Activated T-helper 1 cell treated with anti-CD3 and anti-CD28 coated beads, Interleukin-12 subunit alpha, Interleukin-12 subunit beta, Interleukin-2, Interleukin-4 antibody, amounts not matched to agents 30 ng/mL and 10 ng/mL and 1 ng/mL, durations not matched to agents 14 hours and 24 hours and 36 hours (primary cell): ENCODE measurements at regions of chr3 and their contacts with region 1.

Region 1: DNA sequence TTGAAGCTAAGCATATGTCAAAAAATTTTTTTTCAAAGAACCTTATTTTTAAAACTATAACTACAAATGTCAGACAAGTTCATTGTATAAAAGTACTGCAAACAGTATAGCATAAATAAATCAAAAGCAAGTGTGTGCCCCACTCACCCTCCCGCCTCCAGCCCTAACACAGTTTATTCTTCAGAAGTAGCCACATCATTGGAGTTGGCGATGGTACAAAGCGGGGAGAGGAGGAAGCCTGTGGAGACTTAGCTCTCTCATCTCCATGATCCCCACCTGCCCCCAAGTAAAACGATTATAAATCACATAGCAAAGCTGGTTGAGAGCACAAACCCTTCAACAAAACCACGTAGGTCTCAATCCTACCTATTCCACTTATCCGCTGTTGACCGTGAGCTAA is 33.6 kb downstream of the FOXP1 start:
- DNase-seq: no peak
- H3K4me3 Mint-ChIP-seq: no peak overlapping the region
- H3K27ac Mint-ChIP-seq: no peak overlapping the region
- H3K4me1 Mint-ChIP-seq: no peaks in the 10 kb centered on the region
- H3K27me3 Mint-ChIP-seq: peaks cover 18% of the 10 kb centered on the region

Region 2: GRCh38 chr3:71444028-71444860 is 105.7 kb before region 1 on chr3:
- intact Hi-C with region 1: no loop called
- DNase-seq: peak; percentile 71
- H3K4me3 Mint-ChIP-seq: peak overlapping the region; percentile 74
- H3K27ac Mint-ChIP-seq: peak overlapping the region; percentile 95
- H3K4me1 Mint-ChIP-seq: peaks cover 73% of the 10 kb centered on the region
- H3K27me3 Mint-ChIP-seq: peaks cover 8% of the 10 kb centered on the region

Region 3: GRCh38 chr3:71504250-71505036 is 45.5 kb before region 1 on chr3:
- intact Hi-C with region 1: no loop called
- DNase-seq: no peak
- H3K4me3 Mint-ChIP-seq: no peak overlapping the region
- H3K27ac Mint-ChIP-seq: no peak overlapping the region
- H3K4me1 Mint-ChIP-seq: peaks cover 11% of the 10 kb centered on the region
- H3K27me3 Mint-ChIP-seq: peaks cover 19% of the 10 kb centered on the region

Region 4: DNA sequence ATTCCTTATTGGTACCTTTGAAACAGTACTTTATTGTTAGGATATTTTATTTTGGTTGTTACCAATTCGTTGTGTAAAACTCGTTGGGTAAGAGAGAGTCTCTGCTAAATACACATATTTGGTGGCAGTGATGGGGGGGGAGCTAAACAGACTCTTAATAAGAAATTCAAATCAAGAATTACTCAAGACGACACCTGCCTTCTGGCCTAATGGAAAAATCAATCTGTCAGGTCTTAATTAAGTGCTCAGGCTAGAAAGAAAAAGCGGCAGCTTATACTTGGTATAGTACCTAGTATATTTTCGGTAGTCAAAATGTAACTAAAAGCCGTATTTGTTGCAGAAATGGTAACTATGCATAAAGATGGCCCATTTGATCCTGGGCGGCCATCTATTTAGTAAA is 15.4 kb after region 1 on chr3:
- intact Hi-C with region 1: loop called (anchors 1 kb)
- DNase-seq: no peak
- H3K4me3 Mint-ChIP-seq: no peak overlapping the region
- H3K27ac Mint-ChIP-seq: no peak overlapping the region
- H3K4me1 Mint-ChIP-seq: no peaks in the 10 kb centered on the region
- H3K27me3 Mint-ChIP-seq: no peaks in the 10 kb centered on the region